HCT116 (cell line): ENCODE measurements at regions of chr5 and their contacts with region 1.

Region 1: DNA sequence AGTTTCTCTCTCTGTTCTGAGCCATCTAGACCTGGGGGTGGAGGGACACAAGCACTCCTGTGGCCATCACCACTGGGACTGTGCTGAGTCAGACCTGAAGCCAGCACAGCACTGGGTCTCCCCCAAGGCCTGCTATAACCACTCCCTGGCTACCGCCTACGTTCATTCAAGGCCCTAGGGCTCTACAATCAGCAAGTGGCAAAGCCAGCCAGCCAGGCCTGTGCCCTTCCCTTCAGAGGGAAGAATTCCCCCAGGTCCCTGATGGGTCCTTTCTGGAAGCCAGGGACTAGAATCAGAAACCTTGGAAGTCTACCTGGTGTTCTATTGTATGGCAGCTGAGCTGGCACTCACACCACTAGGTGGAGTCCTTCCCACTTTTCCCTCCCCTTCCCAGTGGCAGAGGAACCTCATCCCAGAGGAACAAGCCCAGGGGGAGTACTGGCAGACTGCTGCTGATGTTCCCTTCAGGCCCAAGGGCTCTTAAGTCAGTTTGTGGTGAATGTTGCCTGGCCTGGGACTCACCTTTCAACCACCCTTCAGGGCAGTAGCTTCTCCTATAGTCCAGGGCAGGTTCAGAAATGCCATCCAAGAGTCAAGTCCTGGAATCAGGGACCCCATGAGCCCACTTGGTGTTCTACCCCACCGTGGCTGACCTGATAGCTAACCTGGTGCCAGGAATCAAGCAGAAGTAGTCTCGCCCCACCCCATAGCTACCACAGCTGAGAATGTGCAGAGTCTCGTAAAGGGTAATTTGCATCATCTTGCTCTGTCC is 20.0 kb downstream of the JMY start:
- DNase-seq: peak; percentile 31
- ATAC-seq: peak; percentile 98
- H3K4me3 ChIP-seq: no peak overlapping the region
- H3K27ac ChIP-seq: no peak overlapping the region
- H3K4me1 ChIP-seq: peaks cover 3 to 9% of the 10 kb centered on the region in 2 experiments; a peak in 3 of 4 replicates
- H3K27me3 ChIP-seq: no peaks in the 10 kb centered on the region
- CTCF ChIP-seq: peak; percentile 49 to 89 (median 84); a peak in 5 of 6 replicates
- POLR2A ChIP-seq: no peak
- RAD21 ChIP-seq: peak; percentile 69

Region 2: GRCh38 chr5:79464695-79465332 is 208.8 kb after region 1 on chr5:
- CTCF ChIA-PET with region 1: interaction called, 9 read pairs
- POLR2A ChIA-PET with region 1: no interaction called
- RAD21 ChIA-PET with region 1: no interaction called
- intact Hi-C with region 1: loop called (anchors 1 kb)
- DNase-seq: peak; percentile 10
- ATAC-seq: peak; percentile 71
- H3K4me3 ChIP-seq: no peak overlapping the region
- H3K27ac ChIP-seq: no peak overlapping the region
- H3K4me1 ChIP-seq: no peaks in the 10 kb centered on the region
- H3K27me3 ChIP-seq: no peaks in the 10 kb centered on the region
- CTCF ChIP-seq: peak; percentile 44 to 81 (median 78); a peak in 5 of 6 replicates
- POLR2A ChIP-seq: no peak
- RAD21 ChIP-seq: peak; percentile 84